Activated CD8-positive, alpha-beta T cell treated with anti-CD3 and anti-CD28 coated beads, Interleukin-2, amount 10 ng/mL, durations not matched to agents 7 days and 5 days (primary cell): ENCODE measurements at regions of chr11 and their contacts with region 1.

Region 1: DNA sequence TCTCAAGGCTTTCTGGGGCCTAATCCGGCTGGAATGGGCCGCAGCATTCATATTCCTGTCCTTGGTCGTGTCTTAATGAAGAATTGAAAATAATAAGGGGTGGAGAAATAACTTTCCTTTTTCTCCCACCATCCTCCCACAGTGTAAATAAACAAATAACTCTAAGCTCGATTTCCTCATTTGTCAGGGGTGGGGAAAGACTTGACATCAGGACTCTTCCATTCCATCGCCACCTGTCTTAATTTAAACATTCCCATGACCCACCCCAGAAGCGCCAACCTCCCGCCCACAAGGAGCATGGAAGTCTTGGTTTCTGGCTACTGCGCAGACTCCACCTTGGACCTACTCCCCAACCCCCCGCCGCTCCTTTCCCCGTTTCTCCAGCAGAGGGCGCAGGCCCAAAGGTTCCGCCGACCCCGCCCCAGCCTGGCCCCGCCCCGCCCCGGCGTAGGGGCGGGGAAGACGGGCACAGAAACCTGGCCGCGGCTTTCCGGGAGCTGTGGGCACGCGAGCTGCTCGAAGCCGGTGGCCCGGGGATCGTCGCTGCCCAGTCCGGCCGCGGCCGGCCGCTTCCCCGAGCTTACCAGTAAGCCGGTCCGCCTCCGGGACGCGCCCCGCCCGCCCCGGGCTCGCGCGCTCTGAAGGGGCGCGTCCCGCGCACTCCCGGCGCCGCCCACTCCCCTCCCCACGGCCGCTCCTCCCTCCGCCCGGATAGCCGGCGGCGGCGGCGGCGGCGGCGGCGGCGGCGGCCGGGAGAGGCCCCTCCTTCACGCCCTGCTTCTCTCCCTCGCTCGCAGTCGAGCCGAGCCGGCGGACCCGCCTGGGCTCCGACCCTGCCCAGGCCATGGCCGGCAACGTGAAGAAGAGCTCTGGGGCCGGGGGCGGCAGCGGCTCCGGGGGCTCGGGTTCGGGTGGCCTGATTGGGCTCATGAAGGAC is at the start of gene CBL:
- DNase-seq: peak; percentile 97
- ATAC-seq: peak; percentile 87
- H3K4me3 Mint-ChIP-seq: peak within 1 kb of the TSS; percentile 99
- H3K27ac Mint-ChIP-seq: peak within 1 kb of the TSS; percentile 92
- H3K4me1 Mint-ChIP-seq: peaks cover 28% of the 10 kb centered on the region
- H3K27me3 Mint-ChIP-seq: no peaks in the 10 kb centered on the region
- total RNA-seq, gene CBL: 43.6 to 43.7 TPM

Region 2: DNA sequence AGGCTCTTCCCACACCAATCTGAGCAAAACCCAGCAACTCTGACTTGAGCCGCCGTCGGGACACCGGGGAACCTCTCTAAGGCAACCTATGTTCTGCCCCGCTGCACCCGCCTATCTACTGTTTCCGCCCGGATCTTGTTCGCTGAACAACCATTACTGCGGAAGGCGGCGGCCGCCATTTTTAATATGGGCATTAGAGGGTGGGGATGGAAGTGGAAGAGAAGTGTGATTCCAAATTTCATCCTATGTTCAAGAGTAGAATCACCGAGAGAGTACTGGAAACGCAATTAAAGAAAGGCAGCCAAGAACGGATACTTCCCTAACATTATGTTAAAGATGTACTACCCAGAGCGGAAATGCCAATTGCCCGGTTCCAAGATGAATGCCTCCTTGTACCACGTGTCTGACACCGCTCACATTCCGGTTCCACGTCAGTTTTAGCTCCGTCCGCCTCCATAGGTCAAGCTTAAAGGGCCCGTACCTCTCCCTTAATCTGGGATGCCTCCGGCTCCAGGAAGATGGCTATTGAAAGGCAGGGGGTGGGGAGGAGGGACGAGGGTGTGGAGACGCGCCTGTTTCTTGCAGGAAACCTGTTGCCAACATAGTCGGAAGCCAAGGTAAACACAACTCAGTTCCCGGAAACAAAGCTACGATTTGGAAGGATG is 104.0 kb before region 1 on chr11 and contains the start of gene DPAGT1:
- CTCF ChIA-PET with region 1: interaction called, 13 read pairs
- POLR2A ChIA-PET with region 1: interaction called, 4 read pairs
- DNase-seq: peak; percentile 92
- ATAC-seq: peak; percentile 85
- H3K4me3 Mint-ChIP-seq: peak within 1 kb of the TSS; percentile 90
- H3K27ac Mint-ChIP-seq: peak within 1 kb of the TSS; percentile 95
- H3K4me1 Mint-ChIP-seq: peaks cover 55% of the 10 kb centered on the region
- H3K27me3 Mint-ChIP-seq: no peaks in the 10 kb centered on the region
- total RNA-seq, gene DPAGT1: 52.5 to 57.7 TPM

Region 3: GRCh38 chr11:119190531-119190930 is 15.3 kb before region 1 on chr11:
- CTCF ChIA-PET with region 1: interaction called, 33 read pairs
- POLR2A ChIA-PET with region 1: interaction called, 3 read pairs
- DNase-seq: no peak
- ATAC-seq: no peak
- H3K4me3 Mint-ChIP-seq: no peak overlapping the region
- H3K27ac Mint-ChIP-seq: no peak overlapping the region
- H3K4me1 Mint-ChIP-seq: no peaks in the 10 kb centered on the region
- H3K27me3 Mint-ChIP-seq: no peaks in the 10 kb centered on the region

Region 4: DNA sequence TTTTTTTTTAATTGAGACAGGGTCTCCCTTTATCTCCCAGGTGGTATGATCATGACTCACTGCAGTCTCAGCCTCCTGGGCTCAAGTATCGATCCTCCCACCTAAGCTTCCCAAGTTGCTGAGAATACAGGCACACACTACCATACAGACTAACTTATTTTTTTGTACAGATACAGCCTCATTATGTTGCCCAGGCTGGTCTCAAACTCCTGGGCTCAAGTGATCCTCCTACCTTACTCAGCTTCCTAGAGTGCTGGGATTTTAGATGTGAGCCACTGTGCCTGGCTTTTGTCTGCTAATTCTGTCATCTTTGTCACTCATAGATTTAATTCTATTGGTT is 43.8 kb after region 1 on chr11:
- CTCF ChIA-PET with region 1: interaction called, 11 read pairs
- POLR2A ChIA-PET with region 1: no interaction called
- DNase-seq: no peak
- ATAC-seq: no peak
- H3K4me3 Mint-ChIP-seq: no peak overlapping the region
- H3K27ac Mint-ChIP-seq: no peak overlapping the region
- H3K4me1 Mint-ChIP-seq: peaks cover 13% of the 10 kb centered on the region
- H3K27me3 Mint-ChIP-seq: no peaks in the 10 kb centered on the region

Region 5: DNA sequence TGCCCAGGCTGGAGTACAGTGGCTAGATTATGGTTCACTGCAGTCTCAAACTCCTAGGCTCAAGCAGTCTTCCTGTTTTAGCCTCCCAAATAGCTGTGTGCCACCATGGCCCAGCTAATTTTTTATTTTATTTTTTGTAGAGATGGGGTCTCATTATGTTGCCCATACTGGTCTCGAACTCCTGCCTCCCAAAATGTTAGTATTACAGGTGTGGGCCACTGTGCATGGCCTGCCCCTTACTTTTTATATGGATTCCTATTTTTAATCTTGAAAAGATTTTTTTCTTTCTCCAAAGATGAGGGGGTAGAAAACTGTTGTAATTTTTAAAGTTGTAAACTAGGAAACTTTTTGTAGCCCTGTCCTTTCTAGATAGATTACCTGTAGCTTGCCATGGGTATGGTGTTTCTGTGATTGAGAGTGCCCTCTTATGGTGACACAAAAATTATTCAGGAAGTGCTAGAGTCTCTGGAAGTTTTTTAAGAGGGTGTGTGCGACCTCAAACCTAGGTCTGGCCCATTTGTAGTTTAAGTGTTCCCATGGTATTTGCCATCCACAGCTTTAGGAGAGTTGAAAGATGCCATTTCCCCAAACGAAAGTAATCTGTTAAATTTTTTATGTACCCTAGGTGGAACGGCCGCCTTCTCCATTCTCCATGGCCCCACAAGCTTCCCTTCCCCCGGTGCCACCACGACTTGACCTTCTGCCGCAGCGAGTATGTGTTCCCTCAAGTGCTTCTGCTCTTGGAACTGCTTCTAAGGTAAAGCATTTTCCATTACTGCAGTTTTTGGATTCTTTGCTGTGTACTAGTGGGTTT is 78.7 kb after region 1 on chr11:
- CTCF ChIA-PET with region 1: interaction called, 63 read pairs
- POLR2A ChIA-PET with region 1: interaction called, 4 read pairs
- DNase-seq: peak; percentile 29
- ATAC-seq: peak; percentile 88
- H3K4me3 Mint-ChIP-seq: no peak overlapping the region
- H3K27ac Mint-ChIP-seq: no peak overlapping the region
- H3K4me1 Mint-ChIP-seq: peaks cover 31% of the 10 kb centered on the region
- H3K27me3 Mint-ChIP-seq: no peaks in the 10 kb centered on the region